ENCODE measurements at regions of chr11 and their contacts with region 1.

Region 1: DNA sequence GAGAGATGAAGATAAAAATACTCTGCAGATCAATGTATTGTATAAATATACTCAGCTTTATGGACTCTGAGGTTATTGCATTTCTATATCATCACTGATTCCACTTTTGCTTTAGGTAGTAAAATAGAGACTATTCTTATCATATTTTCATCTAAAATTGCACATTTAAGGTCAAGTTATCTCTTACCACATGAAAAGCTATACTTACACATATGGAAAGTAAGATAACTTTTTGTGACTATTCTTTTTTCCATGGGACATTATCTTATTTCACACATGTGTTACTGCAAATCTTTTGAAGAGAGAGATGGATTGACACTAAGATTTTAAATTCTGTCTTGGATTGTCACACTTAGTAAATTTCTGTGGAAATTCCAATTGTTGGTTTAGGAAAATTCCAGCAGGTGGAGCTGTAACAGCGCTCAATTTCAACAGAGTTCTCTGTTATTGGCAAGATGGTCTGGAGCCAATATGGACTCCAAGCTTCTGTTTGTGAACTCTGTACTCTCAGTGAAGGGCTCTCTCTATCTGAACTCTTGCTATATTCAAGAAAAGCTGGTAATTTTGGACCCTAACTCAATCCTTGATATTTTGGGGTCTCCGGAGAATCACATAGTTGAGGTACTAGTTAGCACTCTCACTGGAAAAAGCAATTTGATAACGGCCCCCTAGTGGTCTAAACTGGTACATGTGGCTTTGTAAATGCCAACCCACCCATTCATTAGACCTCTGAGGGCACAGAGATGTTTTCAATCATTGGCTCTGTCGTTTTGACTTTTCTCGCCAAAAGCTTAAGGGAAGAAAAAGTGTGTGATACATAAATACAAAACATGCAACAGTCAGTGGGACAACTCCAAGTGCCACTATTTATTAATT is 429.7 kb downstream of the ETS1 start:
- DNase-seq: peak in 1 of 2 donors; percentile 40
- ATAC-seq: peak; percentile 83

Region 2: GRCh38 chr11:128039140-128040021 is 118.3 kb before region 1 on chr11:
- intact Hi-C with region 1: loop called in 1 of 2 experiments (anchors 10 kb)
- DNase-seq: peak; percentile 18 to 29
- ATAC-seq: peak; percentile 44

Region 3: GRCh38 chr11:128210148-128210940 is 52.7 kb after region 1 on chr11:
- intact Hi-C with region 1: no loop called
- DNase-seq: peak in 1 of 2 donors; percentile 56
- ATAC-seq: peak; percentile 96

Region 4: GRCh38 chr11:128535468-128536457 is 378.1 kb after region 1 on chr11:
- intact Hi-C with region 1: no loop called
- DNase-seq: no peak
- ATAC-seq: peak; percentile 94